OCI-LY7 (cell line): ENCODE measurements at regions of chr5 and their contacts with region 1.

Region 1: GRCh38 chr5:72018146-72018803 is 89.0 kb upstream of the MAP1B start:
- DNase-seq: peak; percentile 66
- H3K4me3 ChIP-seq: no peak overlapping the region
- H3K27ac ChIP-seq: no peak overlapping the region
- H3K4me1 ChIP-seq: no peaks in the 10 kb centered on the region
- CTCF ChIP-seq: peak; percentile 96

Region 2: DNA sequence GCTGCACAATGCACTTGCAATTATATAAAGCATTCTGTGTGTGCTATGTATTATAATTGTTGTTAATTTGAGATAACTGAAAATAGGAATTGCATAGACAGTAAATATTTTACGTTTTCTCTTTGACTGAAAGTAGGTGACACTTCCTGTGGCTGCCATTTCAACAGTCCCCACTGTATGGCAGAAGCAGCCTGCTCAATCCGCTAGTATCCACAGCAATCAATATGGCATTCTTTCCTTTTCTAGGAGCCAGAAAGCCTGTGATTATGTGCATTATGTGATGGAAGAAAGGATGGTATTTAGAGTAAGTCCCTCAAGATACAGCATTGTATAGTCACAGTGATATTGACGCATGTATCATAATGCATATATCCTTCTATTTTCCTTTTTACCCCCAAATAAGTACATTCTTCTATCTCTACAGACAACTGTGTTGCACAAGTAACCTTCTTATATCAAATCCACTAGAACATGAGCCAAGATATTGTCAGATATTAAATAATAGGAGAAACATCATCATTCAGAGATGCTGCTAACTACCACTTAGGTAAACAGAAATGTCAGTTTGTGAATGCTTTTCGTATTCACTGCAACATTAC is 239.5 kb before region 1 on chr5:
- CTCF ChIA-PET with region 1: no interaction called
- POLR2A ChIA-PET with region 1: no interaction called
- intact Hi-C with region 1: loop called (anchors 2 kb)
- DNase-seq: peak; percentile 59
- H3K4me3 ChIP-seq: no peak overlapping the region
- H3K27ac ChIP-seq: no peak overlapping the region
- H3K4me1 ChIP-seq: peaks cover 9% of the 10 kb centered on the region
- CTCF ChIP-seq: peak; percentile 94

Region 3: GRCh38 chr5:72000707-72001106 is 17.6 kb before region 1 on chr5:
- CTCF ChIA-PET with region 1: no interaction called
- POLR2A ChIA-PET with region 1: no interaction called
- intact Hi-C with region 1: no loop called
- DNase-seq: no peak
- H3K4me3 ChIP-seq: no peak overlapping the region
- H3K27ac ChIP-seq: no peak overlapping the region
- H3K4me1 ChIP-seq: no peaks in the 10 kb centered on the region
- CTCF ChIP-seq: no peak

Region 4: GRCh38 chr5:72224946-72225463 is 206.7 kb after region 1 on chr5:
- CTCF ChIA-PET with region 1: no interaction called
- POLR2A ChIA-PET with region 1: no interaction called
- intact Hi-C with region 1: no loop called
- DNase-seq: no peak
- H3K4me3 ChIP-seq: no peak overlapping the region
- H3K27ac ChIP-seq: no peak overlapping the region
- H3K4me1 ChIP-seq: no peaks in the 10 kb centered on the region
- CTCF ChIP-seq: no peak